GM12878 (cell line): ENCODE measurements at regions of chr4 and their contacts with region 1.

Region 1: GRCh38 chr4:138267835-138268234 is 25.7 kb upstream of the SLC7A11 start:
- DNase-seq: no peak
- ATAC-seq: no peak
- H3K4me3 ChIP-seq: no peak overlapping the region
- H3K27ac ChIP-seq: no peak overlapping the region
- H3K4me1 ChIP-seq: no peaks in the 10 kb centered on the region
- H3K27me3 ChIP-seq: no peaks in the 10 kb centered on the region
- CTCF ChIP-seq: no peak
- EP300 ChIP-seq: no peak
- POLR2A ChIP-seq: no peak
- RAD21 ChIP-seq: no peak

Region 2: GRCh38 chr4:138292321-138292720 is 24.5 kb after region 1 on chr4:
- CTCF ChIA-PET with region 1: no interaction called
- POLR2A ChIA-PET with region 1: no interaction called
- RAD21 ChIA-PET with region 1: no interaction called
- SMC1A ChIA-PET with region 1: interaction called, 6 read pairs
- in situ Hi-C with region 1: no loop called
- intact Hi-C with region 1: loop called (anchors 2 kb)
- DNase-seq: no peak
- ATAC-seq: no peak
- H3K4me3 ChIP-seq: no peak overlapping the region
- H3K27ac ChIP-seq: no peak overlapping the region
- H3K4me1 ChIP-seq: no peaks in the 10 kb centered on the region
- H3K27me3 ChIP-seq: no peaks in the 10 kb centered on the region
- CTCF ChIP-seq: no peak
- EP300 ChIP-seq: no peak
- POLR2A ChIP-seq: no peak
- RAD21 ChIP-seq: no peak